ENCODE measurements at regions of chr7 and their contacts with region 1.

Region 1: GRCh38 chr7:140003913-140004382 is 58.8 kb downstream of the PARP12 start:
- DNase-seq: peak; percentile 77
- H3K4me3 ChIP-seq: no peak overlapping the region
- CTCF ChIP-seq: peak; percentile 64

Region 2: DNA sequence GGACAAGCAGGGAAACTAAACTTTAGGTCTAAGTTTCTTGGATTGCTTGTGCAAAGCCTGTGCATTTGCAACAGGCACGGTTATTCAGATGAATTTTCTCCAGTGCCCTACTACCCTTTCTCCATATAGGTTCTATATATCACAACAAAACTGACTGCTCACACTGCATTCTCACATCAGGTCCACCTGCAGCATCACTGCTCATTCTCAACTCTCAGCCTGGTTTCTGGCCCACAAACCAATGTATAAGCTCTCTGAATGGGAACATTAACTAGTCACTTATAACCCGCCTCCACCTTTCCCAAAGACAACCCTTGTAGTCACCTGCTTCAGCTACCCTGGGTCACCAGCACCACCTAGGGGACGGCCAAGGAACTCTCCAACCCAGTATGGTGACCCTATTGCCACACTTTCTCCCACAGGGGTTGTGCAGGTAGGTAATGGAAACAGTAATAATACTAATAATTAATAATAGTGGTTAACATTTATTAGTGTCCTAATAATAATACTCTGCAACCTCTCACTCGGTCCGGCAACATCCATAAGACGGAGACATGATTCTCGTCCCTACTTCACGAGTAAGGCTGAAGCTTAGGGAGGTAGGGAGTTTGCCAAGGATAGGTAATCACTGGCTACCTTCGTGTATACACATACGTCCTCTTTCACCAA is 383.1 kb before region 1 on chr7:
- in situ Hi-C with region 1: loop called (anchors 25 kb)
- DNase-seq: no peak
- H3K4me3 ChIP-seq: no peak overlapping the region
- CTCF ChIP-seq: peak; percentile 75

Region 3: GRCh38 chr7:140096459-140096858 is 92.5 kb after region 1 on chr7:
- in situ Hi-C with region 1: no loop called
- DNase-seq: no peak
- H3K4me3 ChIP-seq: no peak overlapping the region
- CTCF ChIP-seq: no peak

Region 4: DNA sequence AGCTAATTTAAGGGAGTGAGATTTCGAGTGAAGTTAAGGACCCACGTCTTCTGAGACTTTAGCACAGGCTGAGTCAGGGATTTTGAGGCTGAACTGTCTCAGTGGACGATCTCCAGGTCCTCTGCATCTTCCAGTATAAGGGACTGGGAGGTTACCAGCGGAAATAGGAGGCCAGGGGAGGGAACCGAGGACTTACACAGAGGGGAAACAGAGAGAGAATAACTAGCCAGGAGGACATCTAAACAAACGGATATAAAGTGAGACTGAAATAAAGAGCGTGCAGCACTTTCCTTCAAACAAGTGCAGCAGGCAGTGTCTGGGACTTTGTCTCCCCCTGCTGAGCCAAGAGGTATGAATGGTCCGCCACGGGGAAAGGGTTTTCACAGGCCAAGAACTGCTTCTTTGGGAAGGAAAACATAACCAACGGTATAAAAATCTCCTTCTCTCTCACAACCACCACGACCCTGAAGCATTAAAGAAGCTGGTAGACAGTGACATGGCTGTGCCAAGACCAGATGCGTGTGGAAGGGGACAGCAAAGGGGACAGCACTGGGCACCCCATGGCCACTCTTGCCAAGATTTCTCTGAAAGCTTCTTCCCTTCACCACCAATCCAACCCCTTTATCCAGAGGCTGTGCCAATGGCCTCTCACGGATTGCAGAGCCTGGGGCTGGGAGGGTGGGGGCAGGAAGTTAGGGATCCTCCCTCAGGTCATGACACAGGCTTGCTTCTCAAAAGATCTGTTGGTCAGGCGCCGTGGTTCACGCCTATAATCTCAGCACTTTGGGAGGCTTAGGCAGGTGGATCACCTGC is 322.4 kb after region 1 on chr7:
- in situ Hi-C with region 1: no loop called
- DNase-seq: peak; percentile 74
- H3K4me3 ChIP-seq: no peak overlapping the region
- CTCF ChIP-seq: peak; percentile 86

Region 5: GRCh38 chr7:140769852-140770251 is 765.9 kb after region 1 on chr7:
- in situ Hi-C with region 1: no loop called
- DNase-seq: no peak
- H3K4me3 ChIP-seq: no peak overlapping the region
- CTCF ChIP-seq: no peak